ENCODE measurements at regions of chr1 and their contacts with region 1.

Region 1: DNA sequence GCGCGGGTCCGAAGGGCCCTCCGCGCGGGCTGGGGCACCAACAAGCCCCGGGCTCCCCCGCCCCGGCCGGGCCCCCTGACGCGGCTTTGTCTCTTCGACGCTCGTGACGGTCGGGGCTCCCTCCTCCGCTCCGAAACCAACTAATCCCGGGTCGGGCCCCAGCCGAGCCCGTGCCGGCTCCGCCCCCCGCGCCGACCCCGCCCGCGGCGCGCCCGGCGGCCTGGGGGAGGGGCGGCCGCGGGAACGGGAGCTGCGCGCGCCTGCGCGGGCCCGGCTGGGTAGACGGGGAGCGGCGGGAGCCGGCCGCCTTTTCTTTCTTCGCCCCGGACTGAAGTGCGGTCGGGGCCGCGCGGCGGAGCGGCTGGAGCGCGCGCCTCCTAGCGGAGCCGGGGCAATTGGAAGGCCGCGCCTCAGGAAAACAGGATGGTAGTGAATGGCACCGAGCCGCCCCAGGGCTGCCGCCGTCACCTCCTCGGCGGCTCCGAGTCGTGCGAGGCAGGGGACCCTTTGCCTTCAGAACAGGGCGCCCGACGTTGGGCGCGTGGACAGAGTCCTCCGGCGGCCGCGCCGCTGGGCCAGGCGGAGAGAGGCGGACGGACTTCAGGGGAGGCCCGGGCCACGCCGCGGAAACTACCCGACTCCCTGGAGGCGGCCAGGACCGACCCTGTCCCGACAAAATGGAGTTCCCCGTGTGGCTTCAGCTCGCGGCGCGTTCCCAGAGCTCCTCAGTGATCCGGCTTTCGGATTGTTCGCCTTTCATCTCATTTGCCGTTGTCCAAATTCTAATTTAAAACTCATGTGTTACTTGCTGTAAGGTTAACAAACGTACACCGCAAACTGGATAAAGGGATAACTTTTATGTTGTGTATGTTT is at the start of gene TP53BP2:
- DNase-seq: peak; percentile 89 to 92 (median 91)
- H3K4me3 ChIP-seq: peak within 1 kb of the TSS; percentile 74 to 84
- H3K4me3 Mint-ChIP-seq: peak within 1 kb of the TSS; percentile 94 to 98 (median 95)
- H3K27ac ChIP-seq: peak within 1 kb of the TSS; percentile 98
- H3K27ac Mint-ChIP-seq: peak within 1 kb of the TSS; percentile 97 to 100 (median 98)
- H3K4me1 ChIP-seq: peaks cover 52% of the 10 kb centered on the region
- H3K4me1 Mint-ChIP-seq: peaks cover 31 to 51% (median 35%) of the 10 kb centered on the region in 4 donors
- H3K27me3 ChIP-seq: no peaks in the 10 kb centered on the region
- H3K27me3 Mint-ChIP-seq: no peaks in the 10 kb centered on the region
- total RNA-seq, gene TP53BP2: 48.3 to 49.8 TPM

Region 2: DNA sequence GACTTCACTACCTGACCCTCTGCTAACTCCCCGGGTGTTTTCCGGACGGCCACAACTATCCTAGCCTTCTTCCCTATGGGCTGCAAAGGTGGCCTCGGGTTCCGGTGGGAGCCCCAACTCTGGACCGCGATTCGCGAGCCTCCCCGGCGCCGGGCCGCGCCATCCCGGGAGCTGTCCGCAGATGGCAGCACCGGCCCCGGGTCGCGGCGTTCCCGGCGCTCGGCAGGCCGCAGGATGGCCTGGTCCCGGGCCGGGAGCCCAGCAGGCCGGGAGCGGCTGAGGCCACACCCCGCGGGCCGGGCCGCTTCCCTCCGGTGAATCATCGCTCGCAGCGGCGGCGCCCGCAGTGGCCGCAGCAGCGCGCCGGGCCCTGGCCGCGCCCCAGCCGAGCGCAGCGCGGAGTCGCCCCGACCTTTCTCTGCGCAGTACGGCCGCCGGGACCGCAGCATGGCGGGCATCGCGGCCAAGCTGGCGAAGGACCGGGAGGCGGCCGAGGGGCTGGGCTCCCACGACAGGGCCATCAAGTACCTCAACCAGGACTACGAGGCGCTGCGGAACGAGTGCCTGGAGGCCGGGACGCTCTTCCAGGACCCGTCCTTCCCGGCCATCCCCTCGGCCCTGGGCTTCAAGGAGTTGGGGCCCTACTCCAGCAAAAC is 133.7 kb before region 1 on chr1 and contains the start of gene CAPN2:
- CTCF ChIA-PET with region 1: interaction called, 3 read pairs
- POLR2A ChIA-PET with region 1: interaction called, 19 read pairs
- intact Hi-C with region 1: loop called (anchors 5 kb)
- DNase-seq: peak; percentile 54 to 67 (median 62)
- H3K4me3 ChIP-seq: peak within 1 kb of the TSS; percentile 53 to 74
- H3K4me3 Mint-ChIP-seq: peak within 1 kb of the TSS; percentile 86 to 95 (median 88)
- H3K27ac ChIP-seq: peak within 1 kb of the TSS; percentile 79
- H3K27ac Mint-ChIP-seq: peak within 1 kb of the TSS; percentile 91 to 98 (median 94)
- H3K4me1 ChIP-seq: peaks cover 61% of the 10 kb centered on the region
- H3K4me1 Mint-ChIP-seq: peaks cover 50 to 75% (median 58%) of the 10 kb centered on the region in 4 donors
- H3K27me3 ChIP-seq: no peaks in the 10 kb centered on the region
- H3K27me3 Mint-ChIP-seq: no peaks in the 10 kb centered on the region
- total RNA-seq, gene CAPN2: 178 to 180 TPM

Region 3: GRCh38 chr1:223811634-223812415 is 34.2 kb before region 1 on chr1:
- CTCF ChIA-PET with region 1: interaction called, 27 read pairs
- POLR2A ChIA-PET with region 1: interaction called, 30 read pairs
- intact Hi-C with region 1: loop called (anchors 1 kb)
- DNase-seq: peak in 4 of 5 donors; percentile 40 to 51 (median 47)
- H3K4me3 ChIP-seq: no peak overlapping the region
- H3K4me3 Mint-ChIP-seq: no peak overlapping the region
- H3K27ac ChIP-seq: no peak overlapping the region
- H3K27ac Mint-ChIP-seq: peak overlapping the region in 3 of 7 donors; percentile 27 to 72 (median 57)
- H3K4me1 ChIP-seq: peaks cover 17% of the 10 kb centered on the region
- H3K4me1 Mint-ChIP-seq: peaks cover 23 to 37% (median 32%) of the 10 kb centered on the region in 4 donors
- H3K27me3 ChIP-seq: no peaks in the 10 kb centered on the region
- H3K27me3 Mint-ChIP-seq: no peaks in the 10 kb centered on the region

Region 4: DNA sequence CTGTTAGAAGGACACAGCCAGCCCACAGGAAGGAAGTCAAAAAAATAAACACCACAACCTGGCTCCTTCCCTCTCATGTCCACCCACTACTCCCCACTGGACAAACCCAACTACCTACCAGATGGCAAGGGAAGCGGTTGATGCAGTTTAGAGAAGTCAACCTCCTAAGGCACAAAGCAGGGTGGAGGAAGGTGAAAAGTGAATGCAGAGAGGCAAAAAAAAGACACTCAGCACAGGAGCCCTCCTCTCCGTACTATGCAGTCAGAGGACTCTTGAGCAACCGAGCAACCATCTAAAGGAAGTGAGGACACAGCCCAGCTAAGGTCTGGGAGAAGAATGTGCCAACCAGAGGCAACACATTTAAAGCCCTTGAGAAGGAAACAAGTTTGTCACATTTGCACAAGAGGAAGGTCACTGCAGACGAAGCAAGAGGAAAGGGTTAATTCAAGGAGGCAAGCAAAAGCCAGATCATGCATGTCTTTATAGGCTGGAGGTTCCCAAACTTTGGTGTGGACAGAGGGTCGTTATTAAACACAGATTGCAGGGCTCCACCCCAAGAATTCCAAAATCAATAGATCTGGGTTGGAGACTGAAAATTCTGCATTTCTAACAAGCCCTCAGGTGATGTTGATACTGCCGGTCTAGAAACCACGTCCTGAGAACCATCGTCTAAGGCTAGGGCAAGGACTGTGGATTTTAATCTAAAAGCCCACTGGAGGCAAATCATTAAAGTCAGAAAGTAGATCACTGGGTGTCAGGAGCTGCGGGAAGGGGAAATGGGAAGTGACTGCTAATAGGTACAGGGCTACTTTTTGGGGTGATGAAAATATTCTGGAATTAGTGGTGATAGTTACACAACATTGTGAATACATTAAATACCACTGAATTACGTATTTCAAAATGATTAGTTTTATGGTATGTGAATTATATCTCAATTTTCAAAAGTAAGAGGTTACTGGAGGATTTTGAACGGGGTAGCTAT is 20.0 kb before region 1 on chr1:
- CTCF ChIA-PET with region 1: interaction called, 14 read pairs
- POLR2A ChIA-PET with region 1: interaction called, 10 read pairs
- intact Hi-C with region 1: no loop called
- DNase-seq: no peak
- H3K4me3 ChIP-seq: no peak overlapping the region
- H3K4me3 Mint-ChIP-seq: peak overlapping the region in 7 of 8 donors; percentile 7 to 72 (median 58)
- H3K27ac ChIP-seq: no peak overlapping the region
- H3K27ac Mint-ChIP-seq: peak overlapping the region in 5 of 7 donors; percentile 13 to 67 (median 39)
- H3K4me1 ChIP-seq: peaks cover 57% of the 10 kb centered on the region
- H3K4me1 Mint-ChIP-seq: peaks cover 51 to 69% (median 61%) of the 10 kb centered on the region in 4 donors
- H3K27me3 ChIP-seq: no peaks in the 10 kb centered on the region
- H3K27me3 Mint-ChIP-seq: no peaks in the 10 kb centered on the region

Region 5: DNA sequence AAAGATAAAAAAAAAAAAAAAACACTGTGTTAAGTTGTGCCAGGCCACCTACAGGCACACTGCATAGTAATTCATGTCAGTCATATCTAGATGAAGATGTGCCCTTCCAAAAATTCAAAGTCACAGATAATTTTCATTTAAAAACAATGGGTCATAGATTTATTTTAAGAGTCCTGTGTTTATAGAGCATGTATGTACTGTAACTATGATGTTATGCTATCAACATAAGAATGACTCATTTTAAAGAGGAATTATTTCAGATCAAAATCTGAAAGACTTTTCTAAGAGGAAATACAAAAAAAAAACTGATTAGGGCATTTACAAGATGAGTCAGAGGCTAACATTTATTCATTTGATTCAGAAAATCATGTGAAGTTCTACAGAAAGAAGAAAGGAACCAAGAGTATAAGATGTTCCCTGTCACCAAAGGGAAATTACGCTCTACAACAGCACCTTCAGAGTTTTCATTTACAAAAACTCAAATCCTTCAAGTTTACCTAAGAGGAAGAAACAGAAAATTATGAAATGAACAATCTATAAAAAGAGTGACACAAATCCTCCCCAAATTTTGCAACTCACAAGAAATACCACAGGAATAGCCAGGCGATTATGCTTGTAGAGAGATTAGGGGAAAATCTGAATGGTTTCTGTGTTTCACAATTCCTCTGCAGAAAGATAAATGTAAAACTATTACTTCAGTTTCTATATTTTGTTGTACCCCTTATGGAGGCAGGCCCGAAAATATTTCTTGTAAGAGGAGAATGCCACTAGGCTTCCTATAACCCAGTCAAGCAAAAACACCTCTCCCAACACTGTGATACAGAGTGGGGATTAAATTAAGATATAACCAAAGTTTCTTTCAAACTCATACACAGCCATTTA is 14.1 kb before region 1 on chr1:
- CTCF ChIA-PET with region 1: interaction called, 17 read pairs
- POLR2A ChIA-PET with region 1: interaction called, 39 read pairs
- intact Hi-C with region 1: loop called (anchors 1 kb)
- DNase-seq: peak; percentile 20 to 54 (median 52)
- H3K4me3 ChIP-seq: no peak overlapping the region
- H3K4me3 Mint-ChIP-seq: peak overlapping the region; percentile 43 to 81 (median 66)
- H3K27ac ChIP-seq: peak overlapping the region; percentile 70
- H3K27ac Mint-ChIP-seq: peak overlapping the region in 4 of 7 donors; percentile 57 to 97 (median 84)
- H3K4me1 ChIP-seq: peaks cover 69% of the 10 kb centered on the region
- H3K4me1 Mint-ChIP-seq: peaks cover 20 to 30% (median 25%) of the 10 kb centered on the region in 4 donors
- H3K27me3 ChIP-seq: no peaks in the 10 kb centered on the region
- H3K27me3 Mint-ChIP-seq: no peaks in the 10 kb centered on the region

Measured in CD4-positive, alpha-beta memory T cell (primary cell).